ENCODE measurements at regions of chr15 and their contacts with region 1.

Region 1: DNA sequence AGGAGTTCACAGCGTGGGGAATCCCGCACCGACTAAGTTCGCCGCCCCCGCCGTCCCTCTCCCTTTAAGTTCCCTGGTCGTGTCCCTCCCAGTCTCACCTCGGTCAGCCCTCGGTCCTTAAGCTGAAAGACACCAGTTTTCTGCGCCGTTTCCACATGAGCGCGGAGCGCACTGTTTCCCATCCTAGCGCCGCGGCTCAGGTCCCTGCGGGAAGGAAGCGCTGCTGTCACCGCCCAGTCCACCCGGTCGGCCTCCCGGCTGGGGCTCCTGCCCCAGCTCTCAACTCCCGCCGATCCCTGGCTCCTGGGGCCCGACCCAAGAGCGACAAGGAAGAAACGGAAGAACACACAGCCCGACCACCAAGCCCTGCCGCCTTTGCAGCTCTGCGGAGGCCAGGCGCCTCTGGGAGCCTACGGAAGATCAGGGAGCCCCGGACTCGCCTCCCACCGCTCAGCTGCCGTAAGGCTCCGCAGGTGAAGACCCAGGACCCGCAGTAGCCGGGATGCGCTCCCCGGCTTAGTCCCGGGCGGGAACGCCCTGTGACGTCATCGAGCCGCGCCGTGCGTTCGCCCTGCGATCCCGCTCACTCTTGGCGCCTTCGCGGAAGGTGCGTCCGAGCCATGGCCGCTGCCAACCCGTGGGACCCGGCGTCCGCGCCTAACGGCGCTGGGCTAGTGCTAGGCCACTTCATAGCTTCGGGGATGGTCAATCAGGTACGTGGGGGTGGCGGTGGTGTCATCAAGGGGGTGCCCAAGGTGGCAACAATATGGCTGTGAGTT is at the starts of genes HAUS2 and LRRC57:
- DNase-seq: peak; percentile 88 to 94
- ATAC-seq: peak; percentile 95
- total RNA-seq, gene HAUS2: 10.5 to 13.2 TPM
- total RNA-seq, gene LRRC57: 27.4 to 32.2 TPM

Region 2: DNA sequence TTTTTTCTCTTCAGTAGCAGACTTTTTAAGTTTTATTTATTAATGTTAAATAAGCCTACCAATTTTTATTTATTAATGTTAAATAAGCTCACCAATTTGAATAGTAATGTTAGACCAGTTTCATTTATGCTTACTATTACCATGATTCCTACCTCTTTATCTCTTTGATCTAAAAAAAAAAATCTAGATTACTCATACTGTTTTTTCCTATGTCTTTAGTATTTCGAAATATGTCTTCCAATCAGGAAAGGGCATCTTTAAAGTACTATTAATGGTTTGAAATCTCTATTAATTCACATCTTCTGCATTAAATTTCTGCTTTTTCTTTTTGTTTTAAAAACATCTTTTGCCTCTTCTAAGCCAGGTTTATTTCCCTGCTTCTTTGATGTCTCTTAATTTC is 801.6 kb before region 1 on chr15:
- intact Hi-C with region 1: no loop called
- DNase-seq: no peak
- ATAC-seq: no peak

Region 3: GRCh38 chr15:42650208-42651066 is 102.0 kb after region 1 on chr15:
- intact Hi-C with region 1: loop called in 1 of 2 experiments (anchors 5 kb)
- DNase-seq: peak; percentile 53 to 76
- ATAC-seq: peak; percentile 100